Lower leg skin (tissue), 4 donors: ENCODE measurements at regions of chr9 and their contacts with region 1.

Region 1: GRCh38 chr9:89410641-89411350 is 87.1 kb downstream of the SEMA4D start:
- DNase-seq: no peak
- H3K4me3 ChIP-seq: no peak overlapping the region
- CTCF ChIP-seq: no peak
- POLR2A ChIP-seq: no peak

Region 2: DNA sequence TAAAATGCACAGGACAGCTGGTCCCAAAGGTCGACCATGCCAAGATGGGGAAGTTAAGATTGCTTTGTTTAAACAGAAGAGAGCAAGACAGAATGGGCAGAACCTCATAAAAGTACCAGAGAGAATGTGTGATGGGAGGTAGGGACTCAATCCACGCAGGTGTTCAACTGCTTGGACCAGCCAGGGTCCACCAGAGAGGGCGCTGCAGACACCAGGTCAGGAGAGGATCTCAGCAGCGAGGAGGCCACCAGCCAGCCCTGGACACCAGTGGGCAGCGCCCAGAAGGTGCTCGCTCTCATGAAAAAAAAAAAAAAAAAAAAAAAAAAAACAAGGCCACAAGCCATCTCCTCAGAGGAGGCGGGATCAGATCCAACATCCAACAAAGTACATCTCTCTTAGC is 314.0 kb before region 1 on chr9:
- intact Hi-C with region 1: no loop called
- DNase-seq: no peak
- H3K4me3 ChIP-seq: no peak overlapping the region
- CTCF ChIP-seq: no peak
- POLR2A ChIP-seq: no peak

Region 3: GRCh38 chr9:89358985-89359384 is 51.8 kb before region 1 on chr9:
- intact Hi-C with region 1: loop called (anchors 10 kb)
- DNase-seq: peak in 1 of 2 donors; percentile 60
- H3K4me3 ChIP-seq: no peak overlapping the region
- CTCF ChIP-seq: no peak
- POLR2A ChIP-seq: no peak